ENCODE measurements at regions of chr15 and their contacts with region 1.

Region 1: GRCh38 chr15:78056714-78057269 is 20.7 kb downstream of the TBC1D2B start:
- DNase-seq: peak in 2 of 5 donors; percentile 32 to 54
- H3K4me3 ChIP-seq: peak overlapping the region in 1 of 2 donors; percentile 26
- H3K4me3 Mint-ChIP-seq: peak overlapping the region; percentile 31 to 90 (median 82)
- H3K27ac ChIP-seq: peak overlapping the region; percentile 64
- H3K27ac Mint-ChIP-seq: peak overlapping the region; percentile 86 to 98 (median 93)
- H3K4me1 ChIP-seq: peaks cover 98% of the 10 kb centered on the region
- H3K4me1 Mint-ChIP-seq: peaks cover 69 to 91% (median 81%) of the 10 kb centered on the region in 4 donors
- H3K27me3 ChIP-seq: no peaks in the 10 kb centered on the region
- H3K27me3 Mint-ChIP-seq: no peaks in the 10 kb centered on the region

Region 2: GRCh38 chr15:77974098-77974414 is 82.7 kb before region 1 on chr15:
- CTCF ChIA-PET with region 1: no interaction called
- POLR2A ChIA-PET with region 1: no interaction called
- intact Hi-C with region 1: no loop called
- DNase-seq: no peak
- H3K4me3 ChIP-seq: no peak overlapping the region
- H3K4me3 Mint-ChIP-seq: no peak overlapping the region
- H3K27ac ChIP-seq: no peak overlapping the region
- H3K27ac Mint-ChIP-seq: no peak overlapping the region
- H3K4me1 ChIP-seq: no peaks in the 10 kb centered on the region
- H3K4me1 Mint-ChIP-seq: no peaks in the 10 kb centered on the region
- H3K27me3 ChIP-seq: no peaks in the 10 kb centered on the region
- H3K27me3 Mint-ChIP-seq: no peaks in the 10 kb centered on the region

Region 3: GRCh38 chr15:78044407-78045155 is 12.2 kb before region 1 on chr15:
- CTCF ChIA-PET with region 1: interaction called, 18 read pairs
- POLR2A ChIA-PET with region 1: interaction called, 75 read pairs
- intact Hi-C with region 1: no loop called
- DNase-seq: peak in 3 of 5 donors; percentile 38 to 67 (median 50)
- H3K4me3 ChIP-seq: no peak overlapping the region
- H3K4me3 Mint-ChIP-seq: peak overlapping the region in 7 of 8 donors; percentile 57 to 90 (median 75)
- H3K27ac ChIP-seq: peak overlapping the region; percentile 42
- H3K27ac Mint-ChIP-seq: peak overlapping the region; percentile 86 to 98 (median 95)
- H3K4me1 ChIP-seq: peaks cover 100% of the 10 kb centered on the region
- H3K4me1 Mint-ChIP-seq: peaks cover 66 to 99% (median 88%) of the 10 kb centered on the region in 4 donors
- H3K27me3 ChIP-seq: no peaks in the 10 kb centered on the region
- H3K27me3 Mint-ChIP-seq: no peaks in the 10 kb centered on the region

Measured in CD4-positive, alpha-beta memory T cell (primary cell).